ENCODE measurements at regions of chr11 and their contacts with region 1.

Region 1: DNA sequence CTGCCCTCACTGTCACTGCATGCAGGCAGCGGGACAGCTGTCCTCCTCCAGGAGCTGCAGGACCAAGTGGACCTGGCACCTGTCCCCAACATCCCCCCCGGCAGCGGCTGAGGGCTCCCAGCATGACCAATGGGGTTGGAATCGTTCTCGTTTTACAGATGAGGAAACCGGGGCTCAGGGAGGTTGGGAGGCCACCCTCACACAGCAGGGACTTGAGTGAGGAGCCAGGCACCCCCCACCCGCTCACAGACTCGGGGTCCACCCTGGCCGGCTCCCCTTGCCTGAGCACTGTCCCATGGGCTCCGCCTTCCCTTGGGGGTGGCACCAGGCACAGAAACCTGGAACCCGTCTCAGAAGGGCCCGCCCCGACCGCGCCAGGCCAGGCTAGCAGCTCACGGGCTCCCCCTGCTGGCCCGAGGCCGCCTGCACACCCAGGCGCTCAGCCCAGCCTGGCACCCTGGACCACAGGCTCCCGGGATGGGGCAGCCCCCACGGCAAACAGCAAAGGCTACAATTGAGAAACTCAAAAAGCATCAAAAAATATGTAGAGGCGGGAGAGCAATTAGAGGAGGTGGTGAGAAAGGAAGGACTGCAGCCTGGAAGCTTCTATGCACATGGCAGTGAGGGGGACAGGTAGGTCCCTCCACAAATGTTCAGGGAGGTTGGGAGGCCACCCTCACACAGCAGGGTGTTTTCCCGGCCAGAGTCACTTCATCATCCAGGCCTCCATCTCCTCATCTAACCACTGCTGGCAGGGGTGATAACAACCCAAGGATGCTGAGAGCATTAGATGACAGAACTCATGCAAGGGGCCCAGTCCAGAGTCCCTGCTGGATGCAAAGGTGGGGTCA is 12.8 kb downstream of the MACROD1 start:
- DNase-seq: peak; percentile 53
- H3K4me3 Mint-ChIP-seq: no peak overlapping the region
- H3K27ac Mint-ChIP-seq: no peak overlapping the region
- H3K4me1 Mint-ChIP-seq: no peaks in the 10 kb centered on the region
- H3K27me3 Mint-ChIP-seq: no peaks in the 10 kb centered on the region
- CTCF ChIP-seq: peak; percentile 98

Region 2: DNA sequence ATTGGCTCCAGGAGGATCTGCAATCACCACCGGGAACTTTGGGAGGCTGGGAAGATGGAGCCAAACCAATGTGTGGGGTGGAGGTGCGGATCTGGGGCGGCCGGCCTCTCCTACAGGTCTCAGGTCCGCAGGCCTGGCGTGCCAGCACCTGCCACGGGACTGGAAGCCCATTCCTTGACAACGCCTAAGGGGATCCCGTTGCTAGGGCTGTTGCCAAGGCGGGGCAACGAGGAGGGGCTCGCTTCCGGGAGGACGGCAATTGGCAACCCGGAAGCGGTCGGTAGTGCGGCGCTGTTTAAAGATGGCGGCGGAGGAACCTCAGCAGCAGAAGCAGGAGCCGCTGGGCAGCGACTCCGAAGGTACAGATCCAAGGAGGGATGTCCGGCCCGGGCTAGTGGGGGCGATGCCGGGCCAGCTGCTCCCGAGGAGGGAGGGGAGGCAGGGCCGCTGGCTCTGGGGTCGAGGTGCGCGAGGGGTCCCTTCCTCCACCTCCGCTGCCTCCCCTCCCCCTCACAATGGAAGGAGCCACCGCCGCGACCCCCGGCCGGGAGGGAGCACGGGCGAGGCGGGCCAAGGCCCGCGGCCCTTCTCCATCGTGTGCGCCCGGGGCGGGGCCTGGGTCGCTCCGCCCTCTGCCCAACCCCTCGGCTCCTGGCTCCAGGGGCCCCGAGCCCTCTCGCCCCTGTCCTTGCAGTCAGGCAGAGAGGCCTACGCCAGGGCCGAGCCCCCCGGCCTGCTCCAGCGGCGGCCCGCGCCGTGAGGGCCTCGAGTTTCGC is 166.7 kb before region 1 on chr11 and contains the start of gene OTUB1:
- CTCF ChIA-PET with region 1: interaction called, 3 read pairs
- POLR2A ChIA-PET with region 1: interaction called, 3 read pairs
- intact Hi-C with region 1: loop called (anchors 5 kb)
- DNase-seq: peak; percentile 98
- H3K4me3 Mint-ChIP-seq: peak within 1 kb of the TSS; percentile 87
- H3K27ac Mint-ChIP-seq: peak within 1 kb of the TSS; percentile 96
- H3K4me1 Mint-ChIP-seq: peaks cover 10% of the 10 kb centered on the region
- H3K27me3 Mint-ChIP-seq: no peaks in the 10 kb centered on the region
- CTCF ChIP-seq: no peak
- total RNA-seq, gene OTUB1: 50.9 and 56.0 TPM in 2 replicates

Region 3: GRCh38 chr11:64040684-64041322 is 112.3 kb before region 1 on chr11:
- CTCF ChIA-PET with region 1: interaction called, 4 read pairs
- POLR2A ChIA-PET with region 1: no interaction called
- intact Hi-C with region 1: loop called (anchors 5 kb)
- DNase-seq: peak; percentile 16
- H3K4me3 Mint-ChIP-seq: no peak overlapping the region
- H3K27ac Mint-ChIP-seq: no peak overlapping the region
- H3K4me1 Mint-ChIP-seq: no peaks in the 10 kb centered on the region
- H3K27me3 Mint-ChIP-seq: no peaks in the 10 kb centered on the region
- CTCF ChIP-seq: peak; percentile 36

Region 4: GRCh38 chr11:64165849-64166635 is 13.0 kb after region 1 on chr11 and contains the start of gene MACROD1:
- CTCF ChIA-PET with region 1: interaction called, 10 read pairs
- POLR2A ChIA-PET with region 1: interaction called, 5 read pairs
- intact Hi-C with region 1: no loop called
- DNase-seq: peak; percentile 87
- H3K4me3 Mint-ChIP-seq: peak within 1 kb of the TSS; percentile 92
- H3K27ac Mint-ChIP-seq: peak within 1 kb of the TSS; percentile 82
- H3K4me1 Mint-ChIP-seq: peaks cover 7% of the 10 kb centered on the region
- H3K27me3 Mint-ChIP-seq: no peaks in the 10 kb centered on the region
- CTCF ChIP-seq: no peak
- total RNA-seq, gene MACROD1: 15.1 and 15.7 TPM in 2 replicates

Region 5: GRCh38 chr11:64204464-64204989 is 51.5 kb after region 1 on chr11:
- CTCF ChIA-PET with region 1: no interaction called
- POLR2A ChIA-PET with region 1: no interaction called
- intact Hi-C with region 1: no loop called
- DNase-seq: peak; percentile 96
- H3K4me3 Mint-ChIP-seq: no peak overlapping the region
- H3K27ac Mint-ChIP-seq: peak overlapping the region; percentile 37
- H3K4me1 Mint-ChIP-seq: peaks cover 12% of the 10 kb centered on the region
- H3K27me3 Mint-ChIP-seq: no peaks in the 10 kb centered on the region
- CTCF ChIP-seq: peak; percentile 83

Region 6: GRCh38 chr11:64317957-64318693 is 165.1 kb after region 1 on chr11 and contains the start of gene PRDX5:
- CTCF ChIA-PET with region 1: no interaction called
- POLR2A ChIA-PET with region 1: no interaction called
- intact Hi-C with region 1: no loop called
- DNase-seq: peak; percentile 96
- H3K4me3 Mint-ChIP-seq: peak within 1 kb of the TSS; percentile 86
- H3K27ac Mint-ChIP-seq: peak within 1 kb of the TSS; percentile 93
- H3K4me1 Mint-ChIP-seq: peaks cover 36% of the 10 kb centered on the region
- H3K27me3 Mint-ChIP-seq: no peaks in the 10 kb centered on the region
- CTCF ChIP-seq: no peak
- total RNA-seq, gene PRDX5: 274 and 302 TPM in 2 replicates

Region 7: DNA sequence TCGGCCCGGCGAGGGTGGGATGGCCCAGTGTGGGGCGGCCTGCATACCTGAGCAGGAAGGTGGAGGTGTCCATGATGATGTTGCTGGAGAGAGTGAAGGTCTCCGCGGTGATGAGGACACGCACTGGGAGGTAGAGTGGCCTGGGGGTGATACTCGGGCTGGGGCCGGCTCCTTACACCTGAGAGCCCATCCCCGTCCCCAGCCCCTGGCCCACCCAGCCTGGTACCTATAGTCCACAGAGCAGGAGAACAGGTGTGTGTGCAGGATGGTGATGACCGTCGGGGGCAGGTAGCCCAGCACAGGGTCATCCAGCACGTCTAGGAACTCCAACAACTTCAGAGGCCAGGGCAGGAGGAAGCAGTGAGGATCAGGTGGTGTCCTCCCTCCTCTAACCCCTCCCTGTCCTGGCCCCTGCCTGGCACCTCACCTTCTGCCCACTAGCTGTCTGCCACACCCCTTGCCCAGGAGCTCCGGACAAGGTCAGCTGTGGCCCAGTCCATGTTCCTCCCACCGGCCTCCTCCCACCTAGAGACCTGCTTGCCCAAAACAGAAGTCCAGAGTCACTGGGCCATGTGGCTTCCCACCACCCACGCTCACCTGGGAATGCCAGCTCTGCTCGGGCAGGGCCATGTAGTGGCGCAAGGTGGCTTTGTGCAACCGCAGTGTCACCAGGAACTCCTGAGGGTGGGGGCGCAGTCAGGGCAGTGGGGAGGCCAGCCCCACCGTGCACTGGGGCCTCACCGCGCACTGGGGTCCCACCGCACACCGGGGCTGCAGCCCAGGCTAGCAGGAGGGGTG is 752.6 kb after region 1 on chr11:
- CTCF ChIA-PET with region 1: no interaction called
- POLR2A ChIA-PET with region 1: no interaction called
- intact Hi-C with region 1: no loop called
- DNase-seq: no peak
- H3K4me3 Mint-ChIP-seq: no peak overlapping the region
- H3K27ac Mint-ChIP-seq: no peak overlapping the region
- H3K4me1 Mint-ChIP-seq: no peaks in the 10 kb centered on the region
- H3K27me3 Mint-ChIP-seq: no peaks in the 10 kb centered on the region
- CTCF ChIP-seq: no peak